Common myeloid progenitor, CD34-positive (primary cell): ENCODE measurements at regions of chr16 and their contacts with region 1.

Region 1: DNA sequence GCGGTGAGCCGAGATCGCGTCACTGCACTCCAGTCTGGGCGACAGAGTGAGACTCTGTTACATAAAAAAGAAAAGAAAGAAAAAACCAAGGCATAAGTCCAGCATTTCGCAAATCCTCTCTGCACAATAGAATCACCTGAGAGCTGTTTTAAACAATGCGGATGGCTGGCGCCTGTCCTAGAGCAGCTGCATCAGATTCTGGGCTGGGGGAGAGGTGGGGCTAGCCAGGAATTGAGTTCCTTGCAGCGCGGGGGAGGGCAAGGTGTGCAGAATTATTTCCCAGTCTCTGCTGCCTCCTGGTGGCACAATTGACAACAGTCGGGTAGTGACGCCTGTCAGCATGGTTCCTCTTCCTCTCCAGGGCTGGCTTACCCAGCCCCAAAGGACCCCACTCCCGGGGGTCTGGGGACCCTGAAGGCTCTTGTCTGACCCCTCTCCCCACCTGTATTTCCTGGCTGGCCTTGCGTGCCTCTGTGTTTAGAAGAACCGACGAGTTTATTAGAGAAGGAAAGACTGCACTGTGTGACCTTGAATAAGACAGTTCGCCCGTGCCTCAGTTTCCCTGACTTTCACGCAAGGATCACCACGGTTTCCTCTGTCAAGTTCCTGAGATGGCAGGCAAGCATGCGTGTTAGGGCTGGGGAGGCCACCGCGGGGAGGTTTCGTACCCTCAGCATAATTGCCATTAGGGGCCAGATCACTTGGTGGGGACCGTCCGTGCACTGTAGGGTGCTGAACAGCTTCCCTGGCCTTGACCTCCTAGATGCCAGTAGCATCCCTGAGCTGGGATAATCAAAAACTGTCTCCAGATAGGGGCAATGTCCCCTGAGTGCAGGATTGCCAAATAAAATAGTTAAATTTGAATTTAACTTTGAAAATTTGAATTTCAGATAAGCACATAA is 41.0 kb upstream of the PLCG2 start:
- DNase-seq: peak; percentile 82 to 89 (median 85)
- H3K4me3 ChIP-seq: peak overlapping the region in 6 of 7 experiments; percentile 10 to 74 (median 55)
- H3K27ac ChIP-seq: peak overlapping the region in 1 of 2 experiments; percentile 8
- H3K4me1 ChIP-seq: peaks cover 15 to 50% (median 37%) of the 10 kb centered on the region in 4 experiments
- H3K27me3 ChIP-seq: no peaks in the 10 kb centered on the region

Region 2: GRCh38 chr16:81610144-81610842 is 127.8 kb before region 1 on chr16:
- CTCF ChIA-PET with region 1: no interaction called
- POLR2A ChIA-PET with region 1: no interaction called
- DNase-seq: no peak
- H3K4me3 ChIP-seq: no peak overlapping the region
- H3K27ac ChIP-seq: no peak overlapping the region
- H3K4me1 ChIP-seq: peaks cover 0 to 2% (median 0%) of the 10 kb centered on the region in 4 experiments
- H3K27me3 ChIP-seq: no peaks in the 10 kb centered on the region

Region 3: GRCh38 chr16:81723098-81723723 is 14.9 kb before region 1 on chr16:
- CTCF ChIA-PET with region 1: interaction called, 13 read pairs
- POLR2A ChIA-PET with region 1: no interaction called
- DNase-seq: peak; percentile 82 to 91 (median 90)
- H3K4me3 ChIP-seq: no peak overlapping the region
- H3K27ac ChIP-seq: no peak overlapping the region
- H3K4me1 ChIP-seq: peaks cover 2 to 9% (median 8%) of the 10 kb centered on the region in 4 experiments
- H3K27me3 ChIP-seq: no peaks in the 10 kb centered on the region

Region 4: GRCh38 chr16:81752225-81752875 is 14.2 kb after region 1 on chr16:
- CTCF ChIA-PET with region 1: interaction called, 141 read pairs
- POLR2A ChIA-PET with region 1: interaction called, 8 read pairs
- DNase-seq: peak; percentile 88 to 97 (median 96)
- H3K4me3 ChIP-seq: peak overlapping the region in 3 of 7 experiments; percentile 2 to 48 (median 22)
- H3K27ac ChIP-seq: peak overlapping the region in 1 of 2 experiments; percentile 78
- H3K4me1 ChIP-seq: peaks cover 19 to 88% (median 72%) of the 10 kb centered on the region in 4 experiments
- H3K27me3 ChIP-seq: no peaks in the 10 kb centered on the region

Region 5: GRCh38 chr16:81834868-81835267 is 96.7 kb after region 1 on chr16:
- CTCF ChIA-PET with region 1: no interaction called
- POLR2A ChIA-PET with region 1: no interaction called
- DNase-seq: no peak
- H3K4me3 ChIP-seq: no peak overlapping the region
- H3K27ac ChIP-seq: no peak overlapping the region
- H3K4me1 ChIP-seq: peaks cover 25 to 81% (median 63%) of the 10 kb centered on the region in 4 experiments
- H3K27me3 ChIP-seq: no peaks in the 10 kb centered on the region

Region 6: DNA sequence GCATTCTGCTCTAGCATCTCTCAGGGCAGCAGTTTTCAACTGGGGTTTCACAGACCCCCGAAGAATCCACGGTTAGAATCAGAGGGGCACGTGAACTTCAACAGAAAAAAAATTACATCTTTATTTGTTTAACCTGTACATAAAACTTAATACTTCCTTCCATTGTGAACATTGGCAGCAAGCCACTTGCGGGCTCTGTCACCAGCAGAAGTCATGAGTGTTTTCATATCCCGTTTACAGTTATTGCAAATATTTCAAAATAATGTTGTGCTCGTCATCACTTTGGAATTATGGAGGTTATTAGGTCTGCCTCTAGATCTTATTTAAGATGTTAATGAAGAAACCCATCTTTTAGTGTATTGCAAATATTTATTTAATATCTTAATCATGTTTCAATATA is 163.3 kb after region 1 on chr16:
- CTCF ChIA-PET with region 1: no interaction called
- POLR2A ChIA-PET with region 1: no interaction called
- DNase-seq: no peak
- H3K4me3 ChIP-seq: no peak overlapping the region
- H3K27ac ChIP-seq: no peak overlapping the region
- H3K4me1 ChIP-seq: no peaks in the 10 kb centered on the region
- H3K27me3 ChIP-seq: no peaks in the 10 kb centered on the region